ENCODE measurements at regions of chr17 and their contacts with region 1.

Region 1: DNA sequence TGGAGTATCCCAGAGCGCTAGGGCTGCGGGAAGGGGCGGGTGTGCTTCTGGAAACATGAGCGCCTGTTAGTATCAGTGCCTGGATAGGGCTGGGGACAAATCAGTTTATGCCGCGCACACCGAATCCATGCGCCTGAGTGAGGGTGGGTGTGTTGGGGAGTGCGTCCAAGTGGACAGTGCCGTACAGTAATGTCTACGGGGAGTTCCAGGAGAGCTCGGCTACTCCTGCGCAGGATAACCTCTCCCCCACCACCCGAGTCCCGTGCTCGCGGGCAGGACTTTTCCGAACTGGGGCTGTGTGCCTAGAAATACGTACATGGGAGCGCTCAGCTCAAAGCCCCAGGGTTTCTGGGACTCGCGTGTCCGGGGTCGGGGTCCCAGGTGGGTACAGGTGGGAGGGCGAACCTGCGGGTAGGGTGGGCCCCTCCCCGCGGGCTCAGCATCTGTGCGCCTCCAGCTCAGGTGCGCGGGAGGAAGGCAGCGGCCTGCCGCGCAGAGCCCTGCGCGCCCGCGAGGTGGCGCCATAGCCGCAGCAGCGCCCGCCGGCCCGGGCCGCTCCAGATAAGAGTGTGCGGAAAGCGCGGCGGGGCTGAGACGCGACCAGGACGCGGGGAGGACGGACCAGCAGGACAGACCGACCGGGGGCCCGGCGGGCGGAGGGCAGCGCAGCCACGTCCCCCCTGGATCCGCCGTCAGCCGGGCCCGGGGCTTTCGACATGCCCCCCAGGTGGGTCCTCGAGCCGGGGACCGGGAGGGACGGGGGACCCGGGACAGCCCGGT is at the start of gene HIC1:
- DNase-seq: peak; percentile 61 to 72
- H3K4me3 ChIP-seq: peak within 1 kb of the TSS in 2 of 3 donors; percentile 21 to 58
- H3K27ac ChIP-seq: peak within 1 kb of the TSS; percentile 87 to 91 (median 90)
- H3K4me1 ChIP-seq: peaks cover 23 to 71% of the 10 kb centered on the region in 2 donors
- H3K27me3 ChIP-seq: peaks cover 5% of the 10 kb centered on the region
- CTCF ChIP-seq: peak in 5 of 6 experiments; percentile 94 to 98 (median 97)
- POLR2A ChIP-seq: peak in 1 of 2 donors; percentile 56
- total RNA-seq, gene HIC1: 13.3 to 23.2 (median 18.3) TPM

Region 2: DNA sequence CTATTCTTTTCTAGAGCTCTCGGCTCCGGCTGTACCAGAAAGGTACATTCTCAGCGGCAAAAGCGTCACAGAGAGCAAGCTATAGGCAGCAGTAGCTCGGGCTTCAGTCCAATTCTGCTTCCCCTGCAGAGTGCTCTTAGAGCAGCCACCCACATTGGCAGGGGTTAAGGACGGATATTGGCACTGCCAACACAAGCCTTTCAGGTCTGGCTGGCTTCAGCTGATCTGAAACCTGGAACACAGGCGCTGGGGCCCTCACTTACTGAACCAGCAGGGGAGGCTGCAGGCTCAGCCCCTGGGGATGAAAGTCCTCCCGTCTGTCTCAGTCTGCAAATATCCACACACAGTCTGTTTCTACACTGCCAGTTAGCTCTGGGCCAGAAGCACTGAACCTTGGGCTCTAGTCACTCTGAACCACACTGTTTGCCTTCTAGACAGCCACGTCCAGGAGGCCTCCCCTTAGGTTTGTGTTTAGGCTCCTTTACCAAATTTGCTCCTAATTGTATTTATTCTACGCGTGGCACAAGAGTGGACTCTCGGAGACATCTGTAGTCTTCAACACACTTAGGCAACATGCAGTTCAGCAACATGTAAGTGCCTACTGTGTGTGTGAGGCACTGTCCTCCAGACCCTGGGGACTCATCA is 40.3 kb after region 1 on chr17:
- intact Hi-C with region 1: loop called (anchors 5 kb)
- DNase-seq: peak; percentile 92 to 93
- H3K4me3 ChIP-seq: no peak overlapping the region
- H3K27ac ChIP-seq: peak overlapping the region; percentile 67 to 74 (median 73)
- H3K4me1 ChIP-seq: peaks cover 30 to 48% of the 10 kb centered on the region in 2 donors
- H3K27me3 ChIP-seq: no peaks in the 10 kb centered on the region
- CTCF ChIP-seq: peak; percentile 71 to 99 (median 96)
- POLR2A ChIP-seq: no peak

Region 3: GRCh38 chr17:2244545-2245525 is 190.1 kb after region 1 on chr17:
- intact Hi-C with region 1: loop called (anchors 2 kb)
- DNase-seq: peak; percentile 83 to 90
- H3K4me3 ChIP-seq: no peak overlapping the region
- H3K27ac ChIP-seq: peak overlapping the region in 2 of 3 donors; percentile 32 to 52
- H3K4me1 ChIP-seq: peaks cover 0 to 16% of the 10 kb centered on the region in 2 donors
- H3K27me3 ChIP-seq: no peaks in the 10 kb centered on the region
- CTCF ChIP-seq: peak; percentile 95 to 99 (median 96)
- POLR2A ChIP-seq: no peak

Region 4: DNA sequence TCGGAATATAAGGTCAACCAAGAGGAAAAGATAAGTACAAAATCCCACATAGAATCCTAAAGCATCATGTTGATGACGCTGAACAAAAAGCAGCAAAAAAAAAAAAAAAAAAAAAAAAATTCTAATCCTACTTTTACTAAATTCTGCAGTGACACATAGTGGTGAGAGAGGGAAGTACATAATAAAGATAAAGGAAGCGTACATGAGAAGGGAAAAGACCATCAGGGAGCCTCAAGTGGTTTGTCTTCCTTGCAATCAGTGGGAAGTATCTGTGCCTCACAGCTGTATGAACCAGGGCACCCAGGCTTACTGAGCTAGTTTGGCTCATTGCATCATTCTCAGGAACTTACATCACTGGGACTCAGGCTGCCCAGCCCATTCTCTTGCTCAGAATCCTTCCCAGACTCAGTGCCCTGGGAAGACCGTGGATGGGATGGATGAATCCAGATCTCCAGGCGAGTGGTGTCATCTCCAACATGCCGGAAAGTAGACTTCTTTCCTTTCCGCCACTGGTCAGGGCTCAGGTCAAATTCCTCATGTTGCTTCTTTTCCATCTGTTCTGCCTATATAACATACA is 227.7 kb after region 1 on chr17:
- intact Hi-C with region 1: loop called (anchors 5 kb)
- DNase-seq: no peak
- H3K4me3 ChIP-seq: no peak overlapping the region
- H3K27ac ChIP-seq: no peak overlapping the region
- H3K4me1 ChIP-seq: peaks cover 16% of the 10 kb centered on the region in 2 donors
- H3K27me3 ChIP-seq: no peaks in the 10 kb centered on the region
- CTCF ChIP-seq: peak; percentile 25 to 87 (median 52)
- POLR2A ChIP-seq: no peak

Measured in thyroid gland (tissue), 4 donors.